ENCODE measurements at regions of chr19 and their contacts with region 1.

Region 1: DNA sequence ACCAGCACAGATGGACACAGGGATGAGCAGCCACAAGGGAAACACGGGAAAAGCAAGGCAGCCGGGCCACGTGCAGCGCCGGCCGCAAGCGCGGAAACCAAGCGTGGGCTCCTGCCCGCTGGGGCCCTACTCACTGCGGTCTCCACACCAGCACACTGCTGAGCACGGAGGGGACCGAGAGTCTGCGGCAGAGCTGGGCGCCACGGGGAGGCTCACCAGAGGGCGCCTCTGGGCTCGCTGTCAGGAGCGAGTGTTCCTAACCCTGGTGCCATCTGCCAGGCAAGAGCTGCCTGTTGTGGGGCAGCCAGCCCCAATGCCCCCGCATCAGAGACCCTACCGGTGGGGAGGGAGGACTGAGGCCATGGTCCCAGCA is 26.5 kb downstream of the MPND start:
- DNase-seq: peak; percentile 69 to 78 (median 71)
- H3K4me3 ChIP-seq: peak overlapping the region; percentile 51 to 69
- H3K4me3 Mint-ChIP-seq: peak overlapping the region; percentile 79 to 97 (median 92)
- H3K27ac ChIP-seq: peak overlapping the region; percentile 87
- H3K27ac Mint-ChIP-seq: peak overlapping the region; percentile 92 to 97 (median 95)
- H3K4me1 ChIP-seq: peaks cover 67% of the 10 kb centered on the region
- H3K4me1 Mint-ChIP-seq: peaks cover 14 to 54% (median 30%) of the 10 kb centered on the region in 4 donors
- H3K27me3 ChIP-seq: no peaks in the 10 kb centered on the region
- H3K27me3 Mint-ChIP-seq: no peaks in the 10 kb centered on the region

Region 2: DNA sequence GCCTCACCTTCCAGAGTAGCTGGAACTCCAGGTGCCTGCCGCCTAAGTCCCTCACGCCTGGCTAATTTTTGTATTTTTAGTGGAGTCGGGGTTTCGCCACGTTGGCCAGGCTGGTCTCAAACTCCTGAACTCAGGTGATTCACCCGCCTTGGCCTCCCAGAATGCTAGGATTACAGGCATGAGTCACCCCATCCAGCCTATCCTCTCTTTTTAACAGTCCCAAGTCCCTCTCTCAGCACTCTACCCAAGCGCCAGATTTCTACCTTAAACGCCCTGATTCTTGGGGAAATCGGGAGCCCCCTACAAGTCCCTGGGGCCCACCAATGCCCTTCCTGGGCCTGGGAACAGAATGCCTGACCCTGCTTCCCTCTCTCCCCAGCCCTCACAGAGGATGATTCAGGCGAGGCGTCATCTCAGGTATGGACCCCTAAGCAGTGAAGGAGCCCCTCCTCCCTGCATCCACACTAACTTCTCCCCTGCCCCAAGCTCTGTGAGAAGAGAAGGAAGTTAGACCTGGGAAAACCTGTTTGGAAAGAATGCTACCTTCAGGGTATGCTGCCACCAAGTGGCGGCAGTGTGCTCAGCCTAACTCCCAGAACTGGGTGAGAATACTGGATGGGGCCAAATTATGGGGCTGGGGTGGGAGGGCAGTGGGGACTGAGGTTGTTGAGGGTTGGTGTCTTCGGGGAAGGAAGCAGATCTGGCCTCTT is 161.3 kb before region 1 on chr19:
- CTCF ChIA-PET with region 1: no interaction called
- POLR2A ChIA-PET with region 1: no interaction called
- intact Hi-C with region 1: no loop called
- DNase-seq: no peak
- H3K4me3 ChIP-seq: no peak overlapping the region
- H3K4me3 Mint-ChIP-seq: no peak overlapping the region
- H3K27ac ChIP-seq: no peak overlapping the region
- H3K27ac Mint-ChIP-seq: no peak overlapping the region
- H3K4me1 ChIP-seq: no peaks in the 10 kb centered on the region
- H3K4me1 Mint-ChIP-seq: peaks cover 3 to 5% (median 3%) of the 10 kb centered on the region in 4 donors
- H3K27me3 ChIP-seq: no peaks in the 10 kb centered on the region
- H3K27me3 Mint-ChIP-seq: peaks cover 0 to 5% of the 10 kb centered on the region in 2 donors

Region 3: GRCh38 chr19:4328243-4328990 is 41.5 kb before region 1 on chr19:
- CTCF ChIA-PET with region 1: interaction called, 4 read pairs
- POLR2A ChIA-PET with region 1: interaction called, 3 read pairs
- intact Hi-C with region 1: loop called (anchors 1 kb)
- DNase-seq: peak; percentile 88 to 93 (median 92)
- H3K4me3 ChIP-seq: peak overlapping the region; percentile 59 to 61
- H3K4me3 Mint-ChIP-seq: peak overlapping the region; percentile 77 to 91 (median 82)
- H3K27ac ChIP-seq: no peak overlapping the region
- H3K27ac Mint-ChIP-seq: peak overlapping the region; percentile 72 to 99 (median 89)
- H3K4me1 ChIP-seq: peaks cover 19% of the 10 kb centered on the region
- H3K4me1 Mint-ChIP-seq: peaks cover 8 to 29% (median 20%) of the 10 kb centered on the region in 4 donors
- H3K27me3 ChIP-seq: no peaks in the 10 kb centered on the region
- H3K27me3 Mint-ChIP-seq: peaks cover 0 to 3% of the 10 kb centered on the region in 2 donors

Measured in CD4-positive, alpha-beta memory T cell (primary cell).